Gastrocnemius medialis (tissue), 4 donors: ENCODE measurements at regions of chr19 and their contacts with region 1.

Region 1: DNA sequence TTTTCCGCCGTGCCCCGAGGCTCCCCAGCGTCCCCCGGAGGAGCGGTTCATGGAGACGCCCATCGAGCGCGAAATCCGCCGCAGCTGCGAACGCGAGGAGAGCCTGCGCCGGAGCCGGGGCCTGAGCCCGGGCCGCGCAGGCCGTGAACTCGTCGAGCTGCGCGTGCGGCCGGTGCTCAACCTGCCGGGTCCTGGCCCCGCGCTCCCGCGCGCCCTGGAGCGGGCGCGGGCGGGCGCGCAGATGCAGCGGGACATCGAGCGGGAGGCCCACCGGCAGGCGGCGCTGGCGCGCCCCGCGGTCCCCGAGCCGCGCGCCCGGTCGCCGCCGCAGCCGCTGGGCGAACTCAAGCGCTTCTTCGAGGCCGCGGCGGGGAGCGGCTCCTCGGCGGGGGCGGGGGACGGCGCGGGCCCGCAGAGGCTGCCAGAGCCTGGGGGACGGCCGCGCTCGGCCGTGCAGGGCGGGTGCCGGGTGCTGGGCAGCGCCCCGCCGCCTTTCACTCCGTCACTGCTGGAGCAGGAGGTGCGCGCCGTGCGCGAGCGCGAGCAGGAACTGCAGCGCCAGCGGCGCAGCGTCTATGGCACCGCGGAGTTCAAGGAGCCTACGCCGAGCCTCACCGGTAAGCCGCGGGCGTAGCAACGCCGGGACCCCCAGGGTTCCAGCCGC is 807 bp downstream of the MISP3 start:
- DNase-seq: peak in 1 of 2 donors; percentile 62
- ATAC-seq: peak; percentile 64 to 77
- H3K4me3 ChIP-seq: peak overlapping the region; percentile 71 to 93 (median 74)
- H3K27ac ChIP-seq: peak overlapping the region; percentile 86 to 97 (median 90)
- H3K4me1 ChIP-seq: peaks cover 20 to 32% of the 10 kb centered on the region in 2 donors
- H3K27me3 ChIP-seq: no peaks in the 10 kb centered on the region
- CTCF ChIP-seq: peak in 4 of 5 experiments; percentile 83 to 96 (median 92)
- POLR2A ChIP-seq: peak; percentile 19 to 60

Region 2: DNA sequence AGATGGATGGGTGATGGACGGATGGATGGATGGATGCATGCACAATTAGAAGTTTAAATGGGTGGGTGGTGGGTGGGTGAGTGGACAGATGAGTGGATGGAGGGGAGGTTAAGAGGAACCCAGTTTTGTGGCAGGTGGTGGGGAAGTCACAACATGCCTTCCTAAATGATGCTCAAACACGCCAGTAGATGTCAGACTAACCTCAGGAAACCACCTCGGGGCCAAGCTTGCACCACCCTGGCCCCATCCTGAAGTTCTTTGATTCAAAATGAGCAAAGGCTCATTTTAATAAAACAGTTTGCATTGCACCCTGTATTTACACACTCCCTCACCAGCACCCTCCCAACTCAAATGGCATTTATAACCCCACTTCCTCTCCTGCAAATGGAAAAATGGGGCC is 475.8 kb before region 1 on chr19:
- in situ Hi-C with region 1: loop called (anchors 25 kb)
- intact Hi-C with region 1: loop called (anchors 10 kb)
- DNase-seq: peak in 1 of 2 donors; percentile 2
- ATAC-seq: no peak
- H3K4me3 ChIP-seq: no peak overlapping the region
- H3K27ac ChIP-seq: no peak overlapping the region
- H3K4me1 ChIP-seq: no peaks in the 10 kb centered on the region
- H3K27me3 ChIP-seq: no peaks in the 10 kb centered on the region
- CTCF ChIP-seq: peak; percentile 16 to 51 (median 41)
- POLR2A ChIP-seq: no peak

Region 3: GRCh38 chr19:13794757-13795589 is 278.4 kb before region 1 on chr19 and contains the start of gene ZSWIM4:
- in situ Hi-C with region 1: no loop called
- intact Hi-C with region 1: loop called (anchors 5 kb)
- DNase-seq: peak; percentile 99
- ATAC-seq: peak; percentile 95 to 96
- H3K4me3 ChIP-seq: peak within 1 kb of the TSS; percentile 64 to 96 (median 78)
- H3K27ac ChIP-seq: peak within 1 kb of the TSS; percentile 79 to 96 (median 90)
- H3K4me1 ChIP-seq: peaks cover 24 to 26% of the 10 kb centered on the region in 2 donors
- H3K27me3 ChIP-seq: no peaks in the 10 kb centered on the region
- CTCF ChIP-seq: no peak
- POLR2A ChIP-seq: peak; percentile 57 to 84
- total RNA-seq, gene ZSWIM4: 3.9 to 6.3 (median 5.0) TPM

Region 4: GRCh38 chr19:13880059-13881043 is 193.0 kb before region 1 on chr19:
- in situ Hi-C with region 1: loop called in 1 of 4 experiments (anchors 10 kb)
- intact Hi-C with region 1: loop called (anchors 1 kb)
- DNase-seq: peak; percentile 94 to 98
- ATAC-seq: peak; percentile 96 to 97
- H3K4me3 ChIP-seq: peak overlapping the region; percentile 33 to 49 (median 44)
- H3K27ac ChIP-seq: peak overlapping the region; percentile 77 to 92 (median 80)
- H3K4me1 ChIP-seq: peaks cover 13 to 17% of the 10 kb centered on the region in 2 donors
- H3K27me3 ChIP-seq: no peaks in the 10 kb centered on the region
- CTCF ChIP-seq: peak; percentile 98 to 100 (median 99)
- POLR2A ChIP-seq: no peak

Region 5: DNA sequence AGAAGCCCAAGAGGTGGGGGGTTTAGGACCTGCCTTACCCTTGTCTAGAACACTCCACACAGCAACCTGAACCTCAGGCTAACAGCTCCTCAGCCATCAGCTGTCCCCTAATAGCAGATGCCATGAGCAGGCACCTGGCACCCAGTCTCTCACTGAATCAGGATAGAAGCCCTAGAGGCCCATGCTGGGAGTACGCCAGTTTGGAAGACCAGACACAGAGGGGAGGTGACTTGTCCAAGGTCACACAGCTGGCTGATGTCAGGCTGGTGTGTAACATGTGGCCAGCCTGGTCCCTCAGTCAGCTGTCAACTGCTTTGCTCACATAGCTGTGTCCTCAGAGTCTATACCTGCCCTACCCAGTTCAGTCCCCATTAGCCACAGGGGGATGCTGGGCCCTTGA is 29.9 kb after region 1 on chr19:
- in situ Hi-C with region 1: no loop called
- intact Hi-C with region 1: no loop called
- DNase-seq: no peak
- ATAC-seq: no peak
- H3K4me3 ChIP-seq: no peak overlapping the region
- H3K27ac ChIP-seq: peak overlapping the region in 1 of 4 donors; percentile 21
- H3K4me1 ChIP-seq: peaks cover 17 to 20% of the 10 kb centered on the region in 2 donors
- H3K27me3 ChIP-seq: no peaks in the 10 kb centered on the region
- CTCF ChIP-seq: no peak
- POLR2A ChIP-seq: no peak

Region 6: DNA sequence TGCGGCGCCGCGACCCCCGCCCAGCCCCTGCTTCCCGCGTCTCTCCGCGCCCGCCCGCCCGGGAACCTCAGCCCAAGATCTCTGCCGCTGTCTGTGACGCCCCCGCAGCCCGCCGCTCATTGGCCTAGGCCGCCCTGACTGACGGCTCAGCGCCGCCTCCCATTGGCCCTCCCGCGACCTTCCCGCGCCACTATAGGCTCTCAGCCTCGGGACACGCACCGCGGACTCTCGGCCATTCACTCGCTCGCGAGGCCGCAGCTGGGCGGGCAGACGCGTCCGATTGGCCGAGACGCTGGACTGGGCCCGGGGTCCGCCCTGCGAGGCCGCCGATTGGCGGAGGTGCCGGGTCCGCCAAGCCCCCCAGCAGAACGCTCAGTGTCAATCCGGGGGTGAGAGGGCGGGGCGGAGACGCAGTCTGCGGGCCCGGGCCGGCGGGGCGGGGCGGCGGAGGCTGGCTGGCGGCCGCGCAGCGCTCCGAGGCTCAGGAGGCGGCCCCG is 44.3 kb after region 1 on chr19 and contains the start of gene PRKACA:
- in situ Hi-C with region 1: no loop called
- intact Hi-C with region 1: loop called (anchors 2 kb)
- DNase-seq: peak; percentile 99
- ATAC-seq: peak; percentile 59 to 73
- H3K4me3 ChIP-seq: peak within 1 kb of the TSS; percentile 83 to 99 (median 95)
- H3K27ac ChIP-seq: peak within 1 kb of the TSS; percentile 99 to 100 (median 99)
- H3K4me1 ChIP-seq: peaks cover 60% of the 10 kb centered on the region in 2 donors
- H3K27me3 ChIP-seq: no peaks in the 10 kb centered on the region
- CTCF ChIP-seq: no peak
- POLR2A ChIP-seq: peak; percentile 76 to 87
- total RNA-seq, gene PRKACA: 74.7 to 180 (median 147) TPM